Activated T-helper 1 cell treated with anti-CD3 and anti-CD28 coated beads, Interleukin-12 subunit alpha, Interleukin-12 subunit beta, Interleukin-2, Interleukin-4 antibody, amounts not matched to agents 30 ng/mL and 10 ng/mL and 1 ng/mL, durations not matched to agents 14 hours and 24 hours and 36 hours (primary cell): ENCODE measurements at regions of chr1 and their contacts with region 1.

Region 1: DNA sequence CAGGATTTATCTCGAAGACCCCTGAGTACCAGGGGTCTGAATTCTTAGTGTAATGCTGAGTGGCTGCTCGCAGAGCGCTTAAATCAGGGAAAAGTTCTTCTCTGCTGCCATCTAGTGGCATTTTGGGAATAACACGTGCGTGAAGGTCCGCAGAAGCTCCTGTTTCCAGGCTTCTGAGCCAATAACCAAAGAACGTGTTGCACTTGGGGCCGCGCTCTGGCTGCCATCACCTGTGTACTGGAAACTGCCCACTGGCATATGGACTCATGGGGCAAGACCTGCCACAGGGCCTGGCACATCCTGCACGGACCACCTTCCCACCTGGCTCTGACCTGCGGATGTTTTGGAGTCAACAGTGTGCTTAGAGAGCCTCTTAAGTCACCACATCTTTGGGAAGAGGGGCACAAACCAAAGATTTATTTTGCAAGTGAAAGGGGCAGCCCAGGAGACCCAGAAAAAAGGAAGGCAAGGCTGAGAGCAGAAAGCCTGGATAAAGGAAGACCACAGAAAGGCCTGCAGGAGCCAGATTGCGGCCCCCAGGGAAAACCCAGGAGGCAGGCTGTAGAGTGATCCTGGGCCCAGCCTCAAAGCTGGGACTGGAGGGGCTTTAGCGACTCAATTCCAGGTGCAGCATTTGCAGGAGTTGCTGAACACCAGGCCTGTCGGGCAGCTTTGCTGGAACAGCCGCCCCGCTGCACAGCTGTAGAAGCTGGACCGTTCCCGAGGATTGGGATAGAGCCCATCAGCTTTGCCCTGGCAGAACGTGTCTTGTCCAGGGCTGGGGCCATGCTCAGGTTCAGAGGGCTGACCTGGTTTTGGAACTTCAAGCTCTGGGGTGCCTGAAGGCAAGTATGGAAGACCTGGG is 13.0 kb downstream of the CHIT1 start:
- DNase-seq: peak; percentile 43
- H3K4me3 Mint-ChIP-seq: no peak overlapping the region
- H3K27ac Mint-ChIP-seq: no peak overlapping the region
- H3K4me1 Mint-ChIP-seq: peaks cover 3% of the 10 kb centered on the region
- H3K27me3 Mint-ChIP-seq: peaks cover 11% of the 10 kb centered on the region

Region 2: DNA sequence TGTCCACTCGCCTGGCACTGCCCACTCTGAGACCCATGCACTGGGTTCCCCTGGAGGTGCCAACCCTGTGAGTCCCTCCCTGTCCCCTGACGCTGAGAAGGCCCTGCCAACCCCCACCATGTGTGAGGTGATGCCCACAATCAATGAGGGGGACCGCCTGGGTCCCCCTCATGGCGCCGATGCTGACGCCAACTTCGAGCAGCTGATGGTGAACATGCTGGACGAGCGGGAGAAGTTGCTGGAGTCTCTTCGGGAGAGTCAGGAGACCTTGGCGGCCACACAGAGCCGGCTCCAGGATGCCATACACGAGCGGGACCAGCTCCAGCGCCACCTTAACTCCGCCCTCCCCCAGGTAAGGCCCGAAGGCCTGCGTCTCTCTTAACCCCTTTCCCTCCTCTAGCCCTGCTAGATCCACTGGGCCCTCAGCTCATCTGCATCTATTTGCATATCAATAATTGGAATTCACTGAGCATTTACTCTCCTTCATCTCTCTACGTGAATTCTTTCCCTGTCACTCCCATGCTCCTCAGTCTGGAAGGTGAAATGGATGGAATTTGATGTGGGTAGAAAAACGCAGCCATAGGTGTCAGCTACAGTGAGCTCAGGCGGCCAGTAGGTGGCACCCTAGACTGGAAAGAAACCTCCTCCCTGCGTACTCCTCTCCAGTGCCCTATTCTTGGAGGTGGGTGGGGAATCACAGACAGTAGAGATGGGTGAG is 177.5 kb before region 1 on chr1:
- intact Hi-C with region 1: loop called (anchors 1 kb)
- DNase-seq: peak; percentile 48
- H3K4me3 Mint-ChIP-seq: no peak overlapping the region
- H3K27ac Mint-ChIP-seq: no peak overlapping the region
- H3K4me1 Mint-ChIP-seq: peaks cover 14% of the 10 kb centered on the region
- H3K27me3 Mint-ChIP-seq: no peaks in the 10 kb centered on the region

Region 3: GRCh38 chr1:203117611-203118575 is 98.6 kb before region 1 on chr1:
- intact Hi-C with region 1: loop called (anchors 1 kb)
- DNase-seq: no peak
- H3K4me3 Mint-ChIP-seq: no peak overlapping the region
- H3K27ac Mint-ChIP-seq: no peak overlapping the region
- H3K4me1 Mint-ChIP-seq: peaks cover 11% of the 10 kb centered on the region
- H3K27me3 Mint-ChIP-seq: peaks cover 31% of the 10 kb centered on the region

Region 4: GRCh38 chr1:203172128-203173010 is 44.1 kb before region 1 on chr1:
- intact Hi-C with region 1: loop called (anchors 1 kb)
- DNase-seq: peak; percentile 17
- H3K4me3 Mint-ChIP-seq: no peak overlapping the region
- H3K27ac Mint-ChIP-seq: no peak overlapping the region
- H3K4me1 Mint-ChIP-seq: no peaks in the 10 kb centered on the region
- H3K27me3 Mint-ChIP-seq: peaks cover 2% of the 10 kb centered on the region